Psoas muscle (tissue), 8 donors: ENCODE measurements at regions of chr2 and their contacts with region 1.

Region 1: DNA sequence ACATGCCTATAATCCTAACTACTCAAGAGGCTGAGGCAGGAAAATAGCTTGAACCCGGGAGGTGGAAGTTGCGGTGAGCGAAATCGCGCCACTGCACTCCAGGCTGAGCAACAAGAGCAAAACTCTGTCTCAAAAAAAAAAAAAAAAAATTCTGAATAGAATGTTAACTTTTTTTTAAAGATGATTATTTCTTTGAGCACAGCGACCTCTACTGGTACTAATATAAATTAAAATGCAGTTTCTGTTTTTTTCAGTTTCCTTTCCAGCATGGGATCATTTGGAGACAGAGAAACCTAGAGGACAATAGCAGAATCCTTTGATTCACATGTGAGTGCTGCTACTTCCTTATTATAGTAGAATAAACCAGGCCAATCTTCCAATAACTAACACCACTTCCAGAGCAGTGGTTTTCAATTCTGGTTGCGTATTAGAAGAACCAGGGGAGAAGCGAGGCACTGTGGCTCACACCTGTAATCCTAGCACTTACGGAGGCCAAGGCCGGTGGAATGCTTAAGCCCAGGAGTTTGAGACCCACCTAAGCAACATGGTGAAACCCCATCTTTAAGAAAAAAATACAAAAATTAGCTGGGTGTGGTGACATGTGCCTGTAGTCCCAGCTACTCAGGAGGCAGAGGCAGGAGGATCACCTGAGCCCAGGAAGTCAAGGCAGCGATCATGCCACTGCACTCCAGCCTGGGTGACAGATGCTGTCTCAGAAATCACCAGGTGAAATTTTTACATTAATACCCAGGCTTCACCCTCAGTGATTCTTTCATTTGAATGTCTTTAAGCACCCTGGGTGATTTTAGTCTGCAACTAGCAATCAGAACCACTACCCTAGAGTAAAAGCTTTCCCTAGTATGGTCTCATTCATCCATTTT is 10.1 kb downstream of the SRSF7 start:
- DNase-seq: peak in 1 of 2 donors; percentile 32
- ATAC-seq: peak; percentile 24 to 49 (median 32)
- H3K4me3 ChIP-seq: no peak overlapping the region
- H3K27ac ChIP-seq: no peak overlapping the region
- H3K4me1 ChIP-seq: peaks cover 21% of the 10 kb centered on the region
- H3K27me3 ChIP-seq: no peaks in the 10 kb centered on the region
- CTCF ChIP-seq: peak; percentile 72

Region 2: GRCh38 chr2:37740164-37740739 is 1000.8 kb before region 1 on chr2:
- intact Hi-C with region 1: no loop called
- DNase-seq: no peak
- ATAC-seq: no peak
- H3K4me3 ChIP-seq: no peak overlapping the region
- H3K27ac ChIP-seq: no peak overlapping the region
- H3K4me1 ChIP-seq: no peaks in the 10 kb centered on the region
- H3K27me3 ChIP-seq: no peaks in the 10 kb centered on the region
- CTCF ChIP-seq: no peak

Region 3: DNA sequence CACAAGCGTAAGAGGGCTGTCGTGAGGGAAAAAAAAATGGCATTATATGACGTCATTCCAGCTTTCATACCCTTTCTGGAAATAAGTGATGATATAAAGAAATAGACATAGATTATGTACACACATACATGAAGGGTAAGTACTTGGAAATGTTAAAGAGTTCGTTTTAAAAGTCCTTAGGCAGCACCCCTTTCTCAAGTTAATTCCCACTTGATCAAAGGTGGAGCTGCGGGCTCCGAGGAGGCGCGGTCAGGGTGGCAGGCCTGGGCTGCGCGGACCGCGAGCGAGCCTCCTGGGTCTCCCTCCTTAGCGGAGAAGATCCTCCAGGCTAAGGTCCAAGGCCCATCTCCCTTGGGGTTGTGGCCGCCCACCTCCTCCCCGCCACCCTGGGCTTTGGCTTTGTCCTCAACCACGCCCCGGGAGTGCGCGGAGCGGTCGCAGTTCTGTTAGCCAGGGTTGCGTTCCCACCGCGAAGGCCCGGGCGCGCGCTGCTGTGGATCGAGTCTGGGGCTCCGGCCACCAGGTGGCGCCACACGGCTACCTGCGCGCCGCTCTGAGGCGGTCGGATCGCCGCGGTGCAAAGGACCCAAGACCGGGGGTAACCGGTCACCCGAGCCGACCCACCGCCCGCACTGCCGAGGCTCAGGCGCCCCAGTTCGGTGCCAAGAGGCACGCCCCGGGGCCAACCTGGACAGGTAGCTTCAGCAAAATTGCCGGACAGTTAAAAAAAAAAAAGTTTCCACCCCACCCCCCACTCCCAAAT is 205.2 kb before region 1 on chr2:
- intact Hi-C with region 1: loop called in 1 of 2 experiments (anchors 5 kb)
- DNase-seq: peak; percentile 87 to 91
- ATAC-seq: peak; percentile 95 to 98 (median 97)
- H3K4me3 ChIP-seq: peak overlapping the region; percentile 70
- H3K27ac ChIP-seq: peak overlapping the region; percentile 25
- H3K4me1 ChIP-seq: peaks cover 4% of the 10 kb centered on the region
- H3K27me3 ChIP-seq: no peaks in the 10 kb centered on the region
- CTCF ChIP-seq: peak; percentile 91

Region 4: GRCh38 chr2:38581193-38582147 is 159.6 kb before region 1 on chr2:
- intact Hi-C with region 1: loop called (anchors 2 to 5 kb)
- DNase-seq: no peak
- ATAC-seq: peak; percentile 71 to 93 (median 83)
- H3K4me3 ChIP-seq: no peak overlapping the region
- H3K27ac ChIP-seq: no peak overlapping the region
- H3K4me1 ChIP-seq: peaks cover 12% of the 10 kb centered on the region
- H3K27me3 ChIP-seq: no peaks in the 10 kb centered on the region
- CTCF ChIP-seq: peak; percentile 74

Region 5: DNA sequence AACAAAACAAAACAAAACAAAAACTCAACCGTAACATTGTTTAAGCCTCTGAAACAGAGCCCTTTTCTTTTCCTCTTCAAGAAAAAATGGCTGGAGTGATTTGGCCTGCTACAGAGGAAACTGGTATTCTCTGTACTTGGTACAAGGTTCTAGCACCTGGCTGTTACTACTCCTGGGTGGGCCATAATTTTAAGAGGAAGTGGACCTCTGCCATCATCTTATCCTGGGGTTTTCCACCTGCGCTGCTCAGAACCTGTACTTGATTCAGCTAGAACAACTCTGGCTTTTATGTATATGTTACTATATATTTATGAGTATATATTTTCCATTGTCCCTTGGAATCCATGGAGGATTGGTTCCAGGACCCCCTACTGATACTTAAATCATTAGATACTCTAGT is 12.4 kb before region 1 on chr2:
- intact Hi-C with region 1: loop called (anchors 1 kb)
- DNase-seq: no peak
- ATAC-seq: no peak
- H3K4me3 ChIP-seq: no peak overlapping the region
- H3K27ac ChIP-seq: no peak overlapping the region
- H3K4me1 ChIP-seq: no peaks in the 10 kb centered on the region
- H3K27me3 ChIP-seq: no peaks in the 10 kb centered on the region
- CTCF ChIP-seq: no peak

Region 6: DNA sequence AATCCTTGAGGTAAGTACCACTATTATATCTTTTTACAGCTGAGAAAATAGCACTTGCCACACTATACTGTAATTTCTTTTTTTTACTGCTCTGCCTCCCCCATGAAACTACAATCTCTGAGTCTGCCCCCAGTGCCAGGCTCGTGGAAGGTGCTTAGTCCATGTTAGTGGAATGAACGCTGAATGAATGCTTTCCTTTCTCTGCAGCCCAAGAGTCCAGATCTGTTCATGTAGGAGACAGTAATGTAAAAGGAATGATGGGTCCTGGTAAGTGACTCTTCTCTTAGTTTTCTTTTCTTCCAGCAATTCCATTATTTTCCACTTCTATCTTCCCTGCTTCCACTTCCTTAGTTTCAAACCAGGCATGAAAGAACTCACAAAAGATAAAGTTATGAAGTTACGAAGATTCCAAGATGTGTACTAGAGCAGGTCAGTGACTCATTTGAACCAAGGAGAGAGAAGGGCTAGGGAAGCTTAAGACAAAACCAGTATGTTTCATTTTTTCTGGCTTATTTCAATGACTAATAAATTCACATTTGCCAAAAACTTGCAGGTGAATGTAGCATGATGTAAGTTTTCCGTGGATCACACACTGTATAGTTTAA is 194.6 kb after region 1 on chr2:
- intact Hi-C with region 1: no loop called
- DNase-seq: no peak
- ATAC-seq: no peak
- H3K4me3 ChIP-seq: no peak overlapping the region
- H3K27ac ChIP-seq: no peak overlapping the region
- H3K4me1 ChIP-seq: no peaks in the 10 kb centered on the region
- H3K27me3 ChIP-seq: no peaks in the 10 kb centered on the region
- CTCF ChIP-seq: no peak